HCT116 (cell line): ENCODE measurements at regions of chr2 and their contacts with region 1.

Region 1: GRCh38 chr2:147331790-147332419 is 512.9 kb upstream of the ACVR2A start:
- DNase-seq: peak; percentile 38
- ATAC-seq: peak; percentile 73
- H3K4me3 ChIP-seq: no peak overlapping the region
- H3K27ac ChIP-seq: no peak overlapping the region
- H3K4me1 ChIP-seq: no peaks in the 10 kb centered on the region
- H3K27me3 ChIP-seq: no peaks in the 10 kb centered on the region
- CTCF ChIP-seq: peak; percentile 57 to 77 (median 59); a peak in 5 of 6 replicates
- POLR2A ChIP-seq: no peak
- RAD21 ChIP-seq: peak; percentile 74

Region 2: GRCh38 chr2:146734042-146734820 is 597.7 kb before region 1 on chr2:
- CTCF ChIA-PET with region 1: interaction called, 11 read pairs
- POLR2A ChIA-PET with region 1: no interaction called
- RAD21 ChIA-PET with region 1: interaction called in 1 of 2 experiments, 3 read pairs
- intact Hi-C with region 1: loop called (anchors 2 kb)
- DNase-seq: peak; percentile 60
- ATAC-seq: peak; percentile 99
- H3K4me3 ChIP-seq: no peak overlapping the region
- H3K27ac ChIP-seq: no peak overlapping the region
- H3K4me1 ChIP-seq: no peaks in the 10 kb centered on the region
- H3K27me3 ChIP-seq: no peaks in the 10 kb centered on the region
- CTCF ChIP-seq: peak; percentile 44 to 75 (median 61); a peak in 4 of 6 replicates
- POLR2A ChIP-seq: no peak
- RAD21 ChIP-seq: peak; percentile 81

Region 3: GRCh38 chr2:146927080-146927711 is 404.7 kb before region 1 on chr2:
- CTCF ChIA-PET with region 1: interaction called, 4 read pairs
- POLR2A ChIA-PET with region 1: no interaction called
- RAD21 ChIA-PET with region 1: no interaction called
- intact Hi-C with region 1: loop called (anchors 5 kb)
- DNase-seq: peak; percentile 39
- ATAC-seq: peak; percentile 92
- H3K4me3 ChIP-seq: no peak overlapping the region
- H3K27ac ChIP-seq: no peak overlapping the region
- H3K4me1 ChIP-seq: 0 out of 4 replicates have a peak, but pooled peaks cover 0 to 2% of the 10 kb centered on the region in 2 experiments
- H3K27me3 ChIP-seq: no peaks in the 10 kb centered on the region
- CTCF ChIP-seq: peak; percentile 33 to 64 (median 63); a peak in 5 of 6 replicates
- POLR2A ChIP-seq: no peak
- RAD21 ChIP-seq: peak; percentile 80

Region 4: GRCh38 chr2:147006736-147007141 is 325.2 kb before region 1 on chr2:
- CTCF ChIA-PET with region 1: no interaction called
- POLR2A ChIA-PET with region 1: no interaction called
- RAD21 ChIA-PET with region 1: no interaction called
- intact Hi-C with region 1: no loop called
- DNase-seq: no peak
- ATAC-seq: no peak
- H3K4me3 ChIP-seq: no peak overlapping the region
- H3K27ac ChIP-seq: no peak overlapping the region
- H3K4me1 ChIP-seq: no peaks in the 10 kb centered on the region
- H3K27me3 ChIP-seq: no peaks in the 10 kb centered on the region
- CTCF ChIP-seq: no peak
- POLR2A ChIP-seq: no peak
- RAD21 ChIP-seq: no peak

Region 5: GRCh38 chr2:147045113-147045512 is 286.8 kb before region 1 on chr2:
- CTCF ChIA-PET with region 1: interaction called, 9 read pairs
- POLR2A ChIA-PET with region 1: no interaction called
- RAD21 ChIA-PET with region 1: interaction called in 1 of 2 experiments, 4 read pairs
- intact Hi-C with region 1: loop called (anchors 2 kb)
- DNase-seq: peak; percentile 26
- ATAC-seq: peak; percentile 83
- H3K4me3 ChIP-seq: no peak overlapping the region
- H3K27ac ChIP-seq: no peak overlapping the region
- H3K4me1 ChIP-seq: no peaks in the 10 kb centered on the region
- H3K27me3 ChIP-seq: no peaks in the 10 kb centered on the region
- CTCF ChIP-seq: peak; percentile 56 to 79 (median 72); a peak in 5 of 6 replicates
- POLR2A ChIP-seq: no peak
- RAD21 ChIP-seq: peak; percentile 68

Region 6: GRCh38 chr2:147082850-147083522 is 248.9 kb before region 1 on chr2:
- CTCF ChIA-PET with region 1: interaction called, 19 read pairs
- POLR2A ChIA-PET with region 1: no interaction called
- RAD21 ChIA-PET with region 1: interaction called in 1 of 2 experiments, 3 read pairs
- intact Hi-C with region 1: loop called (anchors 1 kb)
- DNase-seq: peak; percentile 72
- ATAC-seq: peak; percentile 79
- H3K4me3 ChIP-seq: no peak overlapping the region
- H3K27ac ChIP-seq: no peak overlapping the region
- H3K4me1 ChIP-seq: no peaks in the 10 kb centered on the region
- H3K27me3 ChIP-seq: no peaks in the 10 kb centered on the region
- CTCF ChIP-seq: peak; percentile 48 to 95 (median 84); a peak in 5 of 6 replicates
- POLR2A ChIP-seq: no peak
- RAD21 ChIP-seq: peak; percentile 70

Region 7: DNA sequence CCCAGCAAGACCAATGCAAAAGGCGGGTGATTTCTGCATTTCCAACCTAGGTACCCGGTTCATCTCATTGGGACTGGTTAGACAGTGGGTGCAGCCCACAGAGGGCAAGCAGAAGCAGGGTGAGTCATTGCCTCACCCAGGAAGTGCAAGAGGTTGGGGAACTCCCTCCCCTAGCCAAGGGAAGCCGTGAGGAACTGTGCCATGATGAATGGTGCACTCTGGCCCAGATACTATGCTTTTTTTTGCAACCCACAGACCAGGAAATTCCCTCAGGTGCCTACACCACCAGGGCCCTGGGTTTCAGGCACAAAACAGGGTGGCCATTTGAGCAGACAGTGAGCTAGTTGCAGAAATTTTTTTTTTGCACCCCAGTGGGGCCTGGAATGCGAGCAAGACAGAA is 149.6 kb before region 1 on chr2:
- CTCF ChIA-PET with region 1: no interaction called
- POLR2A ChIA-PET with region 1: no interaction called
- RAD21 ChIA-PET with region 1: no interaction called
- intact Hi-C with region 1: no loop called
- DNase-seq: no peak
- ATAC-seq: peak; percentile 55
- H3K4me3 ChIP-seq: no peak overlapping the region
- H3K27ac ChIP-seq: no peak overlapping the region
- H3K4me1 ChIP-seq: peaks cover 8 to 12% of the 10 kb centered on the region in 2 experiments
- H3K27me3 ChIP-seq: no peaks in the 10 kb centered on the region
- CTCF ChIP-seq: no peak
- POLR2A ChIP-seq: no peak
- RAD21 ChIP-seq: no peak

Region 8: GRCh38 chr2:147389218-147389617 is 57.3 kb after region 1 on chr2:
- CTCF ChIA-PET with region 1: no interaction called
- POLR2A ChIA-PET with region 1: no interaction called
- RAD21 ChIA-PET with region 1: no interaction called
- intact Hi-C with region 1: no loop called
- DNase-seq: no peak
- ATAC-seq: no peak
- H3K4me3 ChIP-seq: no peak overlapping the region
- H3K27ac ChIP-seq: no peak overlapping the region
- H3K4me1 ChIP-seq: no peaks in the 10 kb centered on the region
- H3K27me3 ChIP-seq: no peaks in the 10 kb centered on the region
- CTCF ChIP-seq: no peak
- POLR2A ChIP-seq: no peak
- RAD21 ChIP-seq: no peak

Region 9: DNA sequence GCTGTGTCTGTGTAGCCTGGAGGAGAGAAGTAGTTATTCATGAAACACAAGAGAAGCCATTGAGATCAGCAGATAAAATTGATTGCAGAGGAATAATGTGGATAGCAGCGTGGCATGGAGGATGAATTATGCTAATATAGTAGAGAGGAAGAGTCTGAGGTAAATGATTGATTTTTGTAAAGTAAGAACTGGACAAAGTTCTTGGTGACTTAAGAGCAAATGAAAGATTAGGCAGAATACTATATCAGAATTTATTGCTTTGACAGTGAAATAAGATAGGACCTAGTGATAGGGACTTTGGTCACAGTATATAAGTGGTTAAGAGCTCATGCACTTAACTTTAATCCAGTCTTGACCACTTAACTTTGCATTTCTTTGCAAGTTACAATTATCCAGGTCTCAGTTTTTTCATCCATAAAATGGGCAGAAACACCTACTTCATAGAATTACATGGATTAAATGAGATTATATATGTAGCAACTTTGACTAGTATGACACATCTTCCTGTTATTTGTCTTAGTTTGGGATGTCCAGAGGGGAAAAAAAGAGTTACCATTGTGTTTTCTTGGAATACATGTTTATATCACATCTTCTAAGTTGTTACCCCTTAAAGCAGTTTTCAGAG is 542.1 kb after region 1 on chr2:
- CTCF ChIA-PET with region 1: no interaction called
- POLR2A ChIA-PET with region 1: no interaction called
- RAD21 ChIA-PET with region 1: no interaction called
- intact Hi-C with region 1: no loop called
- DNase-seq: no peak
- ATAC-seq: no peak
- H3K4me3 ChIP-seq: no peak overlapping the region
- H3K27ac ChIP-seq: no peak overlapping the region
- H3K4me1 ChIP-seq: no peaks in the 10 kb centered on the region
- H3K27me3 ChIP-seq: no peaks in the 10 kb centered on the region
- CTCF ChIP-seq: no peak
- POLR2A ChIP-seq: no peak
- RAD21 ChIP-seq: no peak

Region 10: DNA sequence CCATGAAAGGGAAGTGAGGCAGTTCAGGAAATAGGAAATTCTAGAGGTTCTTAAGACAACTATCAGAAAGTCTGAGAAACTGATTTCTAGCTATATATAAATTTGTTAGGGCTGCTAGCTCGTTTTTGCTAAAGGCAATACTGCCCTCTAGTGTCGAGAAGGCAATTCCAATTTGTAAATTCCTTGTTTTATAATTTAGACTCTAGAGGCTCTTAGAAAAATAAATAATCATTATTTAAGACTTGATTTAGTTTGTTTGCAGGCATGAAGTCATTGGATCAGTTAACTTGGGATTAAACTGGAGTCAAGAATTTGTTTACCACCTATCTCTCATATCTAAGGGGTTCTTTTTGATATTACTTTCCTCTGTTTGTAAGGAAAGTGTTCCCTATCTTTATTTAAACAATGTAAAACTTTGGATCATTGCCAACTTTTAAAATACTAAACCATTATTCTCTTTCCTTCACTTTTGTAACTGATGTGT is 579.1 kb after region 1 on chr2:
- CTCF ChIA-PET with region 1: interaction called, 7 read pairs
- POLR2A ChIA-PET with region 1: no interaction called
- RAD21 ChIA-PET with region 1: interaction called in 1 of 2 experiments, 6 read pairs
- intact Hi-C with region 1: loop called (anchors 5 kb)
- DNase-seq: peak; percentile 52
- ATAC-seq: no peak
- H3K4me3 ChIP-seq: no peak overlapping the region
- H3K27ac ChIP-seq: no peak overlapping the region
- H3K4me1 ChIP-seq: no peaks in the 10 kb centered on the region
- H3K27me3 ChIP-seq: no peaks in the 10 kb centered on the region
- CTCF ChIP-seq: peak; percentile 47 to 72 (median 64); a peak in 5 of 6 replicates
- POLR2A ChIP-seq: no peak
- RAD21 ChIP-seq: peak; percentile 87